ENCODE measurements at regions of chr15 and their contacts with region 1.

Region 1: GRCh38 chr15:90174140-90174875 is 26.8 kb upstream of the SEMA4B start:
- DNase-seq: peak; percentile 93
- ATAC-seq: peak; percentile 86 to 92

Region 2: GRCh38 chr15:90184786-90185569 is 10.7 kb after region 1 on chr15:
- intact Hi-C with region 1: loop called in 1 of 2 experiments (anchors 1 kb)
- DNase-seq: peak; percentile 67
- ATAC-seq: peak; percentile 90

Measured in left cardiac atrium (tissue), 4 donors.